Heart right ventricle (tissue), 16 donors: ENCODE measurements at regions of chr3 and their contacts with region 1.

Region 1: DNA sequence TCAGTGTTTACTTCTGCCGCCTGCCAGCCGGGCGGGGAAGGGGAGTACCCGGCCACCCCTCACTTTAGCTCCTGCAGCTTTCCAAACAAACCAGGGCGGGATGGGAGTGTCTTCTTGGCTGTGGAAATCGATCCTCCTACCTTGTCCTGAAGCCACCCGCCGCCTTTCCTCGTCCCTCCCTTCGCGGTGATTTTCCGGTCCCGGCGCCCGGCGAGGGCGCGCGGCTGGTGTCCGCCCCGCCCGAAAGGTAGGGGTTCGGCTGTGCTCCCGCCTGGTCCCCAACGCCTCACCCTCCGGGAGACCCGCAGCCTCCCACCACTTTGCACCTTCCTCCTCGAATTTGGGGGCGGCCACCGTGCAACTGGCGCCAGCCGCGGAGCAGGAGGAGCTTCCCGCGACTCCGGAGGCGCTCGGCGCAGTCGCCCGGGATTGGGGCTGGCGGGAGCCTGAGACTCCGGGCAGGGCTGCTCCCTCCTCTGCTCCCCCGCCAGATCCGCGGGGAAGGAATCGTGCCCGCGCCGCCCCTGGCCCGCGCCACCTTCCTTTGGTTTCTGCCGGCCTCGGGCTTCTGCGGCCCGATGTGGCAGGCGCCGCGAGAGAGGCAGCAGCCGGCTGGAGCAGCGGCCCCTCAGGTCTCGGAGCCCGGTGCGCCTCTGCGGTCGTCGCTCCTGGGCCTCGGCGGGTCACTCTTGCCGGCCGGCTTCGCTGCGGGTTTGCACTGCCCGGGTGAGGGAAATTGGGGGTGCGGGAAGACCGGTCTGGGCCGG is 30.7 kb upstream of the ST3GAL6 start:
- DNase-seq: peak; percentile 59 to 66
- ATAC-seq: peak; percentile 67 to 88 (median 74)
- H3K4me3 ChIP-seq: peak overlapping the region; percentile 76 to 97 (median 90)
- H3K27ac ChIP-seq: peak overlapping the region; percentile 82 to 96 (median 91)
- H3K4me1 ChIP-seq: peaks cover 0 to 46% (median 19%) of the 10 kb centered on the region in 9 donors
- H3K27me3 ChIP-seq: peaks cover 0 to 33% (median 0%) of the 10 kb centered on the region in 7 donors
- CTCF ChIP-seq: peak in 1 of 9 donors; percentile 4

Region 2: DNA sequence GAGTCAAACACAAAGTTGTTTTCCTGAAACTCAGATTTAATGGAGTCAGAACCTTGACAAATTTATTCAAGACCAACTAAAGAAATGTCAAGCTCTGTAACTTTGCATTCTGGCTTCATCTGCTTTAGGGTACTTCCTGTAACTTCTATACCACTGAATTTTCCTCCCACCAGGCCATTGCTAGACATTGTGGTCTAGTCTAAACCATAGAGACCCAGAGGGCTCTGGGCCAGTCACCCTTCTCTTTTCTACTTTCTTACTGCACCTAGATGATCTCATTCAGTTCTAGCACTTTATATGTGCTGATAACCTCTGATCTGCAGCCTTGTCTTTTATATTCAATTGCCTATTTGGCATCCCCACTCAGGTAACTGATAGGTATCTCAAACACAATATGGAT is 272.2 kb before region 1 on chr3:
- intact Hi-C with region 1: no loop called
- DNase-seq: no peak
- ATAC-seq: no peak
- H3K4me3 ChIP-seq: no peak overlapping the region
- H3K27ac ChIP-seq: no peak overlapping the region
- H3K4me1 ChIP-seq: no peaks in the 10 kb centered on the region
- H3K27me3 ChIP-seq: no peaks in the 10 kb centered on the region
- CTCF ChIP-seq: no peak

Region 3: GRCh38 chr3:98522244-98523090 is 210.0 kb before region 1 on chr3 and contains the start of gene CLDND1:
- intact Hi-C with region 1: loop called in 1 of 10 experiments (anchors 10 kb)
- DNase-seq: peak; percentile 98
- ATAC-seq: peak; percentile 99 to 100 (median 100)
- H3K4me3 ChIP-seq: peak within 1 kb of the TSS; percentile 67 to 91 (median 78)
- H3K27ac ChIP-seq: peak within 1 kb of the TSS; percentile 92 to 99 (median 96)
- H3K4me1 ChIP-seq: peaks cover 0 to 41% (median 18%) of the 10 kb centered on the region in 9 donors
- H3K27me3 ChIP-seq: no peaks in the 10 kb centered on the region
- CTCF ChIP-seq: no peak
- total RNA-seq, gene CLDND1: 58.1 to 99.6 (median 75.5) TPM

Region 4: DNA sequence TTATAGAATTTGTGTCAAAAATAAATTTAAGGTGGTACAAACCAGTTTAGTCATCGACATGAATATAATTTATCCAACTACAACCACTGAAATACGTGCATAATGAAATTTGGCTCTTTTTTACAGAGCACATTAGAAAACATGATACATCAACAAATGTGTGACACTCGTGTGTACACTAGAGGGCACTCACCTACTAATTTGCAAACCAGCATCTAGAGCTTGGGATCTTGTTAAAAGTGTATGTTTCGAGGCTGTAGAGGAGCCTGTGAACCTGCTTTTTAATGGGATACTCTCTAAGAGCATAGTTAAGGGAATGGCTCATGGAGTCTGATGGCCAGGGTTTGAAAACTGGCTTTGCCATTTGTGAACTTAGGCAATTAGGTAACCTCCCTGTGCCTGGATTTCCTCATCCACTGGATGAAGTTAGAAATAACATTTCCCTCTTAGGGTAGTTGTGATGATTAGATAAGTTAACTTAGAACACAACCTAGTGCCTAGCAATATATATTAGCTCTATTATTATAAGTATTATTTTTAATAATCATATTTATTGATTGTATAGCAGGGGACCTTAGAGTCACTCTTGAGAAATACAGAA is 130.3 kb before region 1 on chr3:
- intact Hi-C with region 1: loop called in 2 of 10 experiments (anchors 10 kb)
- DNase-seq: peak in 1 of 2 donors; percentile 50
- ATAC-seq: peak; percentile 61 to 90 (median 86)
- H3K4me3 ChIP-seq: no peak overlapping the region
- H3K27ac ChIP-seq: no peak overlapping the region
- H3K4me1 ChIP-seq: peaks cover 0 to 6% (median 0%) of the 10 kb centered on the region in 9 donors
- H3K27me3 ChIP-seq: no peaks in the 10 kb centered on the region
- CTCF ChIP-seq: peak; percentile 55 to 88 (median 74)

Region 5: DNA sequence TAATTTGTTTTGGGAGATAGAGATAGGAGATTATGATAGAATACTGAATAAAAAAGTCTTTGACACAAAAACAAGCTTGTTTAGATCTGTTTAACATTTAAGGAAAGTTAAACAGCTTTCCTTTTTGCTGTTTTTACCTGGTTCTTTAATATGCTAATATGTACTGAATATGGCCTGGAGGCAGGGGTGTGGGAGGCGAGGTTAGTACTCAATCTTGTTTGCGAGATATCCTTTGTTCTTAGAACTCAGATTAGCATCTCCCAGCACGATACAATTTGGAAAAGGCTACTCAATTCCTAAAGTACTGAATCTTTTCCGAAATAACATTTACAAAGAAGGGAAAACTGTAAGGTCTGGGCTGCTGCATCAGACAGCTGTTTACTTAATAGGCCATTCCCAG is 10.1 kb before region 1 on chr3:
- intact Hi-C with region 1: loop called in 1 of 10 experiments (anchors 1 kb)
- DNase-seq: no peak
- ATAC-seq: no peak
- H3K4me3 ChIP-seq: no peak overlapping the region
- H3K27ac ChIP-seq: no peak overlapping the region
- H3K4me1 ChIP-seq: peaks cover 0 to 3% (median 0%) of the 10 kb centered on the region in 9 donors
- H3K27me3 ChIP-seq: no peaks in the 10 kb centered on the region
- CTCF ChIP-seq: no peak

Region 6: GRCh38 chr3:98770261-98771039 is 38.0 kb after region 1 on chr3:
- intact Hi-C with region 1: loop called in 6 of 10 experiments (anchors 5 kb)
- DNase-seq: peak; percentile 44 to 48
- ATAC-seq: peak in 7 of 8 donors; percentile 7 to 65 (median 43)
- H3K4me3 ChIP-seq: no peak overlapping the region
- H3K27ac ChIP-seq: peak overlapping the region in 8 of 10 donors; percentile 3 to 72 (median 48)
- H3K4me1 ChIP-seq: peaks cover 14 to 80% (median 50%) of the 10 kb centered on the region in 9 donors
- H3K27me3 ChIP-seq: no peaks in the 10 kb centered on the region
- CTCF ChIP-seq: no peak

Region 7: GRCh38 chr3:98784666-98785600 is 52.5 kb after region 1 on chr3:
- intact Hi-C with region 1: loop called in 4 of 10 experiments (anchors 5 kb)
- DNase-seq: no peak
- ATAC-seq: peak in 5 of 8 donors; percentile 27 to 59 (median 52)
- H3K4me3 ChIP-seq: no peak overlapping the region
- H3K27ac ChIP-seq: peak overlapping the region in 9 of 10 donors; percentile 7 to 64 (median 32)
- H3K4me1 ChIP-seq: peaks cover 11 to 68% (median 48%) of the 10 kb centered on the region in 9 donors
- H3K27me3 ChIP-seq: no peaks in the 10 kb centered on the region
- CTCF ChIP-seq: no peak

Region 8: DNA sequence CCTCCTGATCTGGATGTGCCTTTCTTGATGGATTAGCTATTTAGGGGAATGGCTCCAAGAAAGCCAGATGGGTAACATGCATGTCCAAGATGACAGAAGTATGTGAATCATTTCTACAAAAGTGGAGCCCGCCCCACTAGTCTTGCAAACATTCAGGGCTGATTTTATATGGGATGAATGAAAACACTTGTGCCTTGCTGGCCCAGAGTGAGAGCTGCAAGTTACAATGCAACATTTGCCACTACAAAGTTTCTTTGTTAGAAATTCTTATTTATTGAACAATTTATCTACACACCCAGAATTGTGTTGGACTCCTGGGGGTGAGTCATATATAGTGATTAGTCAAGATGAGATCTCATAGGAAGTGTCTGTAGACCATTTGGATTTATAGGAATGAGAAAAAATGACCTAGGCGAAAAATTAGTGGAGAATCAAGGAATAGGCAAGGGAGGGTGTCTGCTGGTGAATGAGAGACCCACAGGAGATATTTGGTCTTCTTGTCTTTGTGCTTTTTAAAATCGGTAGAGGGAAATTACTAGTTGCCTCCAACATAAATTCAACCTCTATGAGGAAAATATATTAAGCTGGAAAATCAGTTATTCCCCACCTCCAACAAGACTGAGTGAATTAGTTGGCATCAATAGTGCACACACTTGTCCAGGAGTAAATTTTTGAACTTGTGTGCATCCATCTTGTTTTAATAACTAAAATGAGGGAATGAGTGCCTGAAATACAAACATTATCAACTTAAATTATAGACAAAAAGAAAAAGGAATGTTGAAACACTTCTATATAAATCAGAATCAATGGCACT is 222.5 kb after region 1 on chr3:
- intact Hi-C with region 1: no loop called
- DNase-seq: no peak
- ATAC-seq: no peak
- H3K4me3 ChIP-seq: no peak overlapping the region
- H3K27ac ChIP-seq: no peak overlapping the region
- H3K4me1 ChIP-seq: no peaks in the 10 kb centered on the region
- H3K27me3 ChIP-seq: no peaks in the 10 kb centered on the region
- CTCF ChIP-seq: no peak

Region 9: DNA sequence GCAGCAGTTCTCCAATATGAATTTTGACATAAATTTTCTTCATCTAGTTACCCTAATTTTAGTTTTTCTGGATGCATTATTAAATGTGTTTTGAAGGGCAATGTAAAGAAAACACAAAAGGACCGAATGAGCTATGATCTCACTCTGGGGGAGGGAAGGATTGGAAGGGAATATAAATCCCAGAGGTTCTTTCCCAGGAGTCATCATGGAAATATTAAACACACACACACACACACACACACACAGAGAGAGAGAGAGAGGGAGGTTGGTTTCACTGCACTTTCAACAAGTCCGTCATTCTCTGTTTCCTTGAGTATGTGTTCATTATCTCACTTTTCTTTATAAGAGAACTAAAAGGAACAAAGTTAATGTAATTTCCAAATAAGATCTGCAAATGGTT is 239.7 kb after region 1 on chr3:
- intact Hi-C with region 1: no loop called
- DNase-seq: peak in 1 of 2 donors; percentile 12
- ATAC-seq: no peak
- H3K4me3 ChIP-seq: no peak overlapping the region
- H3K27ac ChIP-seq: peak overlapping the region in 1 of 10 donors; percentile 54
- H3K4me1 ChIP-seq: peaks cover 0 to 3% (median 0%) of the 10 kb centered on the region in 9 donors
- H3K27me3 ChIP-seq: no peaks in the 10 kb centered on the region
- CTCF ChIP-seq: no peak